ENCODE measurements at regions of chrX and their contacts with region 1.

Region 1: DNA sequence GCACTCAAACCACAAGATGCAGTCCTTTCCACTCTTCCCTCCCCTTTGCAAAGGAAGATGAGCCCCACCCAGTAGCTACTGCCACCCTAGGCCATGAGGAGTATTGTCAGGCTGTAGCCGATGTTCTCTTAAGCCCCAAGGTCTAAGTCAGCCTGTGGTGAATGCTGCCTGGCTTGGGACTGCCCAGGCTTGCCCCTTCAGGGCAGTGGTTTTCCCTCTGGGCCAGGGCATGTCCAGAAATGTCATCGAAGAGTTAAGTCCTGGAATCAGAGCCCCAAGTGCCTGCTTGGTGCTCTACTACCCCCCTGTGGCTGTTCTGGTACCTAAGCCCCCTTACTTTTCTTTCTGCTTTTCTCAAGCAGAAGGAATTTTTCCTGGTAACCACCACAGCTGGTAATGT is 11.8 kb upstream of the PGK1 start:
- DNase-seq: no peak
- CTCF ChIP-seq: peak; percentile 19

Region 2: DNA sequence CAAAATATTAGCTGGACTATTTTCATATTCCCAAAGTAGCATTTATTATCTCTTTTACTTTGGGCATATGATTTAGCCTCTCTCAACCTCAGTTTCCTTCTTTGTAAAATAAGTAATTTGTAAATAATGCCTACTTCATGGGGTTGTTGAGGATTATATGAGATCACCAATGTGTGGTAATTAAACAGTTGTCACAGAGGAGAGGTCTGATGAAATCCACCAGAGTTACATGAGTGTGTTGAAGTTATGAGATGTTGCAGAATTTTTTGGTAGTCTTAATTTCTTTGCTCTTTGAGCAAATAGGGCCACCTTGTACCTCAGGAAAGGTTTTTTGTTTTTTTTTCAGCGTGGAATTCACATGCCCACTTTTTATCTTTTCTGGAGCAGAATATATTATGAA is 191.6 kb before region 1 on chrX:
- in situ Hi-C with region 1: loop called (anchors 10 kb)
- DNase-seq: no peak
- CTCF ChIP-seq: no peak

Region 3: GRCh38 chrX:78042601-78043000 is 49.7 kb before region 1 on chrX:
- in situ Hi-C with region 1: no loop called
- DNase-seq: no peak
- CTCF ChIP-seq: no peak

Region 4: GRCh38 chrX:78182881-78183280 is 90.6 kb after region 1 on chrX:
- in situ Hi-C with region 1: no loop called
- DNase-seq: no peak
- CTCF ChIP-seq: no peak

Region 5: DNA sequence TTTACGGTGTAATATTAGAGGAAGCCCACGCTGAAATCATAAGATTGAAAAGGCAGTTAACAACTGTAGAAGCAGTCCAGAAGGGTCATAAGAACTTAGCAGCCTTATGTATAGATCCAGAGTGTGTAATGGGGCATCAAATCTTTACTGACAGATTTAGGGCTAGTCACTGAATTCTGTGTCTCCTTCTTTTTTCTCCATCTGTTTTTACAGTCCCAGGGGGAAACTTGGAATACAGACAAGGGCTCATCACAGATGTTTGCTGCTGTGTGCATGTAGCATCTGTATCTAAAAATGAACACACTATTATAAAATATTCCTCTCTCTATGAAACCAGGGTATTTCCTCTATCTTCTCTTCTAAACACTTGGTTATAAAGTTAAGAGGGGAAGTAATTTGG is 191.2 kb after region 1 on chrX:
- in situ Hi-C with region 1: no loop called
- DNase-seq: no peak
- CTCF ChIP-seq: no peak

Measured in GM13976 (cell line).